ENCODE measurements at regions of chr1 and their contacts with region 1.

Region 1: DNA sequence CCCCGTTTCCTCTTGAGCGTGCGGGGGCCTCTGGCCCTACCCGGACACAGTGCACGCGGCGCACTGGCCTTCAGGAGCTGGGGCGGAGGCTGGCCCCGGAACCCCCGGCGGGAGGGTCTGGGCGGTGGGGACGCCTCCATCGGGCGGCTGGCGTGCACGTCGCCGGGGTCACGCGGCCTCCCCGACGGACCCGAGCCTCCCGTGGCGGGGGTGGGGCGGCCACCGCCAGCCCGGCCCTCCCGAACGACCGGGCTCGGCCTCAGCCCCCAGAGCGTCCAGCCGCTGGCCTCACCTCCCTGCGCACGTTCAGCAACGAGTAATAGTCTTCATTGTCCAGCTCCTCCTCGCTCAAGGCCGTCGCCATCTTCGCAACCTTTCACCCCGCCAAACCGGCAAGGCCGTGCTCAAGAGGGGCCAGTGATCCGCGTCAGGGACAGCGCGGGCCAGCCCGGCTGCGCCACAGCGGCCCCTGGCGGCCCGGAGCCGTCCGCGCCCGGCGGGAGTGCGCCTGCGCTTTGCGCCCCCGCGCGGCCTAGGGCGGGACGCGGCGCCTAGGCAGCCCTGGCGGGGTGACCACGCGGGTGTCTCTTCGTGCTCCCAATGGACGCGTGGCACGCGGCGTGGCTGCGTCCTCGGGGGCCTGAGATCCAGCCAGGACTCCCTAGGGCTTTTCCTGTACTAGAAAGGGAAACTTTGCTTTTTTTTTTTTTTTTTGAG is at the start of gene DNAJC11:
- DNase-seq: no peak
- H3K4me3 ChIP-seq: peak within 1 kb of the TSS; percentile 98
- CTCF ChIP-seq: peak; percentile 68

Region 2: GRCh38 chr1:6686294-6686693 is 15.3 kb before region 1 on chr1:
- CTCF ChIA-PET with region 1: interaction called, 47 read pairs
- POLR2A ChIA-PET with region 1: interaction called, 4 read pairs
- DNase-seq: no peak
- H3K4me3 ChIP-seq: no peak overlapping the region
- CTCF ChIP-seq: no peak

Region 3: GRCh38 chr1:6691507-6691906 is 10.1 kb before region 1 on chr1:
- CTCF ChIA-PET with region 1: interaction called, 47 read pairs
- POLR2A ChIA-PET with region 1: interaction called, 4 read pairs
- DNase-seq: no peak
- H3K4me3 ChIP-seq: no peak overlapping the region
- CTCF ChIP-seq: no peak

Measured in AG04449 (cell line).